PC-9 (cell line): ENCODE measurements at regions of chr3 and their contacts with region 1.

Region 1: DNA sequence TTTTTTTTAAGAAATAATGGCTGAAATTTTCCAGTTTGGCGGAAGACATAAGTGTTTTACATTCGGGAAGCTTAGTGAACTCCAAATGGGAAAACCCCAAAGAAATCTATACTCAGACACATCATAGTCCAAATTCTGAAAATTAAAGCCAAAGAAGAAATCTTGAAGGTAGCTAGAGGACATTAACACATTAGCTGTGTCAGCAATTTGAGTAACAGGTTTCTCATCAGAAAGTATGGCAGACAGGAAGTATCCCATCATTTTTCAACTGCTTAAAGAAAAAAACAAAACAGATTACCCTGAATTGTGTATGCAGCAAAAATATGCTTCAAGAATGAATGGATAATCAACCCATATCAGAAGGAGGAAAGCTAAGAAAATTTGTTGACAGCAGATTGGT is 261.7 kb downstream of the DOCK3 start:
- DNase-seq: no peak
- H3K4me3 ChIP-seq: no peak overlapping the region
- H3K27ac ChIP-seq: no peak overlapping the region
- H3K4me1 ChIP-seq: no peaks in the 10 kb centered on the region
- H3K27me3 ChIP-seq: no peaks in the 10 kb centered on the region
- CTCF ChIP-seq: no peak

Region 2: DNA sequence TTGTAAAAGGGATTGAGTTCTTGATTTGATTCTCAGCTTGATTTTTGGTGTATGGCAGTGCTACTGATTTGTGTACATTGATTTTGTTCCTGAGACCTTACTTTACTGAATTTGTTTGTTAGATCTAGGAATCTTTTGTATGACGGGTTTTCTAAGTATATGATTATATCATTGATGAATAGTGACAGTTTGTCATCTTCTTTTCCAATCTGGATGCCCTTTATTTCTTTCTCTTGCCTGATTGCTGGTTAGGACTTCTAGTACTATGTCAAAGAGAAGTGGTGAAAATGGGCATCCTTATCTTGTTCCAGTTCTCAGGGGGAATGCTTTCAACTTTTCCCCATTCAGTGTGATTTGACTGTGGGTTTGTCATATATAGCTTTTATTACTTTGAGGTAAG is 158.7 kb before region 1 on chr3:
- CTCF ChIA-PET with region 1: no interaction called
- POLR2A ChIA-PET with region 1: interaction called, 10 read pairs
- intact Hi-C with region 1: no loop called
- DNase-seq: no peak
- H3K4me3 ChIP-seq: no peak overlapping the region
- H3K27ac ChIP-seq: no peak overlapping the region
- H3K4me1 ChIP-seq: no peaks in the 10 kb centered on the region
- H3K27me3 ChIP-seq: no peaks in the 10 kb centered on the region
- CTCF ChIP-seq: no peak

Region 3: GRCh38 chr3:50885070-50885850 is 51.1 kb before region 1 on chr3:
- CTCF ChIA-PET with region 1: no interaction called
- POLR2A ChIA-PET with region 1: no interaction called
- intact Hi-C with region 1: no loop called
- DNase-seq: no peak
- H3K4me3 ChIP-seq: no peak overlapping the region
- H3K27ac ChIP-seq: no peak overlapping the region
- H3K4me1 ChIP-seq: no peaks in the 10 kb centered on the region
- H3K27me3 ChIP-seq: no peaks in the 10 kb centered on the region
- CTCF ChIP-seq: no peak

Region 4: GRCh38 chr3:51123531-51123930 is 187.1 kb after region 1 on chr3:
- CTCF ChIA-PET with region 1: no interaction called
- POLR2A ChIA-PET with region 1: no interaction called
- intact Hi-C with region 1: no loop called
- DNase-seq: no peak
- H3K4me3 ChIP-seq: no peak overlapping the region
- H3K27ac ChIP-seq: no peak overlapping the region
- H3K4me1 ChIP-seq: no peaks in the 10 kb centered on the region
- H3K27me3 ChIP-seq: no peaks in the 10 kb centered on the region
- CTCF ChIP-seq: no peak